ENCODE measurements at regions of chr4 and their contacts with region 1.

Region 1: GRCh38 chr4:48141048-48141447 is 7.0 kb upstream of the TXK start:
- DNase-seq: peak in 7 of 9 donors; percentile 16 to 72 (median 49)
- ATAC-seq: peak; percentile 67
- H3K4me3 ChIP-seq: no peak overlapping the region
- H3K4me3 Mint-ChIP-seq: peak overlapping the region in 1 of 10 donors; percentile 4
- H3K27ac ChIP-seq: no peak overlapping the region
- H3K27ac Mint-ChIP-seq: peak overlapping the region in 6 of 9 donors; percentile 6 to 97 (median 44)
- H3K4me1 ChIP-seq: peaks cover 36 to 46% of the 10 kb centered on the region in 2 donors
- H3K4me1 Mint-ChIP-seq: peaks cover 34 to 53% (median 51%) of the 10 kb centered on the region in 7 donors
- H3K27me3 ChIP-seq: no peaks in the 10 kb centered on the region
- H3K27me3 Mint-ChIP-seq: no peaks in the 10 kb centered on the region

Region 2: GRCh38 chr4:47463235-47463956 is 677.7 kb before region 1 on chr4 and contains the start of gene COMMD8:
- CTCF ChIA-PET with region 1: no interaction called
- POLR2A ChIA-PET with region 1: no interaction called
- intact Hi-C with region 1: loop called in 1 of 2 experiments (anchors 5 kb)
- DNase-seq: peak; percentile 91 to 97 (median 95)
- ATAC-seq: peak; percentile 93
- H3K4me3 ChIP-seq: peak within 1 kb of the TSS; percentile 82
- H3K4me3 Mint-ChIP-seq: peak within 1 kb of the TSS; percentile 77 to 93 (median 90)
- H3K27ac ChIP-seq: peak within 1 kb of the TSS; percentile 74
- H3K27ac Mint-ChIP-seq: peak within 1 kb of the TSS; percentile 76 to 97 (median 95)
- H3K4me1 ChIP-seq: peaks cover 9 to 17% of the 10 kb centered on the region in 2 donors
- H3K4me1 Mint-ChIP-seq: peaks cover 20 to 48% (median 38%) of the 10 kb centered on the region in 7 donors
- H3K27me3 ChIP-seq: no peaks in the 10 kb centered on the region
- H3K27me3 Mint-ChIP-seq: no peaks in the 10 kb centered on the region
- total RNA-seq, gene COMMD8: 8.4 to 19.3 (median 16.7) TPM

Region 3: DNA sequence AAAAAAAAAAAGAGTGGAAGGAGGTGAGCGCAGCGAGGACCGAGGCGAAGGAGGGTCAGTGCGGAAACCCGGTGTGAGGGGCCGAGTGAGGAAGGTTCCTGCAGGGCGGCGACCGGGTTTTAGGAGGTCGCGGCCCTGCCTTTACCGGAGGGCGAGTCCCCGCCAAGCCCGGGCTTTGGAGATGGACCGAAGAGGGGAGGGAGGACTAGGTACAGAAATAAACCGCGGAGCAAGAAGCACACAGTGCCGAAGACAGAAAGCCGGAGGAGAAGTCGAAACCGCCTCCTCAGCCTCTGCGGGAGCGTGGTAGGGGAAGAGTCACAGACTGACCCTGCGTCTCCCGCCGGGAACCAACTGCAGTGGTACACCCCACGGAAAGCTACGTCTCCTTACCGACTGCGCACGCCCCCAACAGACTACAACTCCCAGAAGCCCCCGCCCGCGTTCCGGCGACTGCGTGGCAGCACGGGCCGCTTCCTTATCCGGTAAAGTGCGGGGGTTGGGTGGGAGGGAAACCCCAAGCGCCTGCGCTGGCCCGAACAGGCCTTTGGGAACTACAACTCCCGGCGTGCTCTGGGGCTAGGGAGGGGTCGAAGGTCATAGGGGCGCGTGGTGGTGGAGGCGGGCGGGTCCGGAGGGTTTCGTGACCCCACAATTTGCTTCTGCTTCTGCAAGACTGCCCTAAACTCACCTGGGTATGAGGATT is 226.7 kb before region 1 on chr4 and contains the start of gene NFXL1:
- CTCF ChIA-PET with region 1: no interaction called
- POLR2A ChIA-PET with region 1: no interaction called
- intact Hi-C with region 1: loop called (anchors 1 to 2 kb)
- DNase-seq: peak; percentile 90 to 95 (median 93)
- ATAC-seq: peak; percentile 98
- H3K4me3 ChIP-seq: peak within 1 kb of the TSS; percentile 92
- H3K4me3 Mint-ChIP-seq: peak within 1 kb of the TSS; percentile 93 to 99 (median 96)
- H3K27ac ChIP-seq: peak within 1 kb of the TSS; percentile 88
- H3K27ac Mint-ChIP-seq: peak within 1 kb of the TSS; percentile 89 to 98 (median 96)
- H3K4me1 ChIP-seq: peaks cover 12 to 15% of the 10 kb centered on the region in 2 donors
- H3K4me1 Mint-ChIP-seq: peaks cover 18 to 41% (median 32%) of the 10 kb centered on the region in 7 donors
- H3K27me3 ChIP-seq: no peaks in the 10 kb centered on the region
- H3K27me3 Mint-ChIP-seq: no peaks in the 10 kb centered on the region
- total RNA-seq, gene NFXL1: 10.4 to 19.3 (median 13.2) TPM

Region 4: GRCh38 chr4:48016141-48017103 is 124.6 kb before region 1 on chr4 and contains the starts of genes CNGA1 and NIPAL1:
- CTCF ChIA-PET with region 1: no interaction called
- POLR2A ChIA-PET with region 1: no interaction called
- intact Hi-C with region 1: loop called in 1 of 2 experiments (anchors 1 kb)
- DNase-seq: peak; percentile 56 to 79 (median 65)
- ATAC-seq: peak; percentile 96
- H3K4me3 ChIP-seq: peak within 1 kb of the TSS; percentile 75
- H3K4me3 Mint-ChIP-seq: peak within 1 kb of the TSS; percentile 78 to 95 (median 86)
- H3K27ac ChIP-seq: peak within 1 kb of the TSS; percentile 17
- H3K27ac Mint-ChIP-seq: peak within 1 kb of the TSS in 5 of 9 donors; percentile 7 to 91 (median 50)
- H3K4me1 ChIP-seq: peaks cover 0 to 8% of the 10 kb centered on the region in 2 donors
- H3K4me1 Mint-ChIP-seq: peaks cover 6 to 12% (median 10%) of the 10 kb centered on the region in 7 donors
- H3K27me3 ChIP-seq: no peaks in the 10 kb centered on the region
- H3K27me3 Mint-ChIP-seq: peaks cover 3 to 32% (median 11%) of the 10 kb centered on the region in 5 donors
- total RNA-seq, gene CNGA1: not detected
- total RNA-seq, gene NIPAL1: 0.45 to 3.3 (median 1.9) TPM in 4 of 5 experiments, not detected in the other

Region 5: DNA sequence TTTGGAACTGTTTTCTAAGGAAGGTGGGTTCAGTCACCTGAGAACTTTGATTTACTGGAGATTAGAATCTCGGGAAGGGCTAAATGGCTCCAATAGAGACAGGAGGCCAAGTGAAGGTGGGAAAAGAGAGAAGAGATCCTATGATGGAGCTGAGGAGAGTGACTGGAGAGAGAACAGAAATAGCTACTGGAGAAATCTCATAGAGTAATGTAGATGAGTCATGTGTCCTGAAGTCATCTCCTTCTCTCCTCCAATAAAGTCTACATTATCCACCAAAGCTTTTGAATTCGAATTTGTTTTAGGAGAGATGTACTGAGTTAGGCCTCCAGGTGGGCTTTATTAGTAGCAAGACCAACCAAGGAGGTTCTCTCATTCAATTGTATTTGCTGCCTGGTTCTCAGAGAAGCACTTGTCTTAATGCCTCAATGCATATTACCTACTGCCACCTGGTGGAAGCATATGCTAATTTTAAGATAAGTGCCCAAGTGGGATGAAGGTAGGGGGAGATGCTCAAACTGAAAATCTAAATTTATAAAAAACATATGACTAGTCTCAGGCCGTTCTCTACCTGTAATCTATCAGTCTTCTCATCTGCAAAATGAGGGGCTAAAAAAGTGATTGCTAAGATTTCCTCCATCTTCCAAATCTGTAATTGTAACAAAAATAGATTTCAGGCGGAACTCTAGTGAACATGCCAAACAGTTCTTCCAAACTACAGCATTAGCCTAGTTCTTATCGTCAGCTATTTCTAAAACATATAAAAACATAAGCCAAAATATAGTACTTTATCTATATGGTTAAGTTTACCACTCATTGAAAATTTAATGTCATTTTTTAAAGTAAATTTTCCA is 31.4 kb before region 1 on chr4:
- CTCF ChIA-PET with region 1: interaction called, 12 read pairs
- POLR2A ChIA-PET with region 1: interaction called, 6 read pairs
- intact Hi-C with region 1: loop called (anchors 1 kb)
- DNase-seq: peak in 7 of 9 donors; percentile 19 to 61 (median 49)
- ATAC-seq: peak; percentile 82
- H3K4me3 ChIP-seq: no peak overlapping the region
- H3K4me3 Mint-ChIP-seq: no peak overlapping the region
- H3K27ac ChIP-seq: no peak overlapping the region
- H3K27ac Mint-ChIP-seq: peak overlapping the region in 8 of 9 donors; percentile 0 to 80 (median 58)
- H3K4me1 ChIP-seq: peaks cover 0 to 19% of the 10 kb centered on the region in 2 donors
- H3K4me1 Mint-ChIP-seq: peaks cover 35 to 72% (median 56%) of the 10 kb centered on the region in 7 donors
- H3K27me3 ChIP-seq: no peaks in the 10 kb centered on the region
- H3K27me3 Mint-ChIP-seq: no peaks in the 10 kb centered on the region

Region 6: DNA sequence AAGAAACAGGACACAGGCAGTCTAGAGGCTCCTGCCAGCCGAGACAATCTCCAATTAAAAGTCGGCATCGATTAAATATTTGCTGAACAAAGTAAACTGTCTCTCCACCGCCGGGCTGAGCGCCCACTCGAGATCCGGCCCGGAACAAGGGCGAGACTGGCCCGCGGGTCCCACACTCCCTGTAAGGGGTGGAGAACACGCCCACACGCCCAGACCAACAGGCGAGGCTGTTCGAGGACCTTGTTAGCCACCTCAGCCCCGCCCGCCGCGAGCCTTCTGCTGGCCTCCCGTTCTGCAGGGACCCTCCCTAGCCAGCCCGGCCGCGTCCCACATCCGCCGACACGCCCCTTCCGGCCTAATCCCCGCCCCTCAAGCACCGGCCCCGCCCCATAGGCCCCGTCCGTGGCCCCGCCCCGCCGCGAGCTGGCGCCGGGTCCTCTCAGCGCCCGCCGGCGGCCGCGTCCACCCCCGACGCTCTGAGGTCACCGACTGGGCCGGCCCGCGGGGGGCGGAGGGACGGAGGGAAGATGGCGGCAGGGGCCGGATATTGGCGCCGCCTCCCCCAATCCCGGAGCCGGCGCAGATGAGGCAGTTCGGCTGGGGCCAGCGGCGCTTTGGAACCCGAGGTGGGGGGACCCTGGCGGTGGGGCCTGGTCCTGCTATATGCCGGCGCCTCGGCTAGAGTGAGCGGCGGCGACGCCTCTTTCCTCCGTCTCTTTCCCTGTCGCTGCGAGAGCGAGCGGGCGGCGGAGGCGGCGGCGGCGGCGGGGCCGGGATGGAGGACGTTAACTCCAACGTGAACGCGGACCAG is 200.1 kb after region 1 on chr4 and contains the start of gene SLAIN2:
- CTCF ChIA-PET with region 1: no interaction called
- POLR2A ChIA-PET with region 1: interaction called, 6 read pairs
- intact Hi-C with region 1: loop called in 1 of 2 experiments (anchors 2 kb)
- DNase-seq: peak; percentile 91 to 100 (median 96)
- ATAC-seq: peak; percentile 93
- H3K4me3 ChIP-seq: peak within 1 kb of the TSS; percentile 76
- H3K4me3 Mint-ChIP-seq: peak within 1 kb of the TSS; percentile 81 to 99 (median 96)
- H3K27ac ChIP-seq: peak within 1 kb of the TSS; percentile 91
- H3K27ac Mint-ChIP-seq: peak within 1 kb of the TSS; percentile 91 to 98 (median 96)
- H3K4me1 ChIP-seq: peaks cover 17 to 20% of the 10 kb centered on the region in 2 donors
- H3K4me1 Mint-ChIP-seq: peaks cover 40 to 54% (median 45%) of the 10 kb centered on the region in 7 donors
- H3K27me3 ChIP-seq: no peaks in the 10 kb centered on the region
- H3K27me3 Mint-ChIP-seq: no peaks in the 10 kb centered on the region
- total RNA-seq, gene SLAIN2: 53.2 to 87.5 (median 77.2) TPM

Measured in naive thymus-derived CD4-positive, alpha-beta T cell (primary cell).